Activated CD8-positive, alpha-beta T cell treated with anti-CD3 and anti-CD28 coated beads, Interleukin-2, amount 10 ng/mL, durations not matched to agents 7 days and 5 days (primary cell): ENCODE measurements at regions of chr10 and their contacts with region 1.

Region 1: GRCh38 chr10:68988530-68989316 is at the start of gene KIFBP:
- DNase-seq: peak; percentile 90
- ATAC-seq: peak; percentile 88
- H3K4me3 Mint-ChIP-seq: peak within 1 kb of the TSS; percentile 99
- H3K27ac Mint-ChIP-seq: peak within 1 kb of the TSS; percentile 97
- H3K4me1 Mint-ChIP-seq: peaks cover 46% of the 10 kb centered on the region
- H3K27me3 Mint-ChIP-seq: no peaks in the 10 kb centered on the region
- total RNA-seq, gene KIFBP: 13.7 to 16.5 TPM

Region 2: DNA sequence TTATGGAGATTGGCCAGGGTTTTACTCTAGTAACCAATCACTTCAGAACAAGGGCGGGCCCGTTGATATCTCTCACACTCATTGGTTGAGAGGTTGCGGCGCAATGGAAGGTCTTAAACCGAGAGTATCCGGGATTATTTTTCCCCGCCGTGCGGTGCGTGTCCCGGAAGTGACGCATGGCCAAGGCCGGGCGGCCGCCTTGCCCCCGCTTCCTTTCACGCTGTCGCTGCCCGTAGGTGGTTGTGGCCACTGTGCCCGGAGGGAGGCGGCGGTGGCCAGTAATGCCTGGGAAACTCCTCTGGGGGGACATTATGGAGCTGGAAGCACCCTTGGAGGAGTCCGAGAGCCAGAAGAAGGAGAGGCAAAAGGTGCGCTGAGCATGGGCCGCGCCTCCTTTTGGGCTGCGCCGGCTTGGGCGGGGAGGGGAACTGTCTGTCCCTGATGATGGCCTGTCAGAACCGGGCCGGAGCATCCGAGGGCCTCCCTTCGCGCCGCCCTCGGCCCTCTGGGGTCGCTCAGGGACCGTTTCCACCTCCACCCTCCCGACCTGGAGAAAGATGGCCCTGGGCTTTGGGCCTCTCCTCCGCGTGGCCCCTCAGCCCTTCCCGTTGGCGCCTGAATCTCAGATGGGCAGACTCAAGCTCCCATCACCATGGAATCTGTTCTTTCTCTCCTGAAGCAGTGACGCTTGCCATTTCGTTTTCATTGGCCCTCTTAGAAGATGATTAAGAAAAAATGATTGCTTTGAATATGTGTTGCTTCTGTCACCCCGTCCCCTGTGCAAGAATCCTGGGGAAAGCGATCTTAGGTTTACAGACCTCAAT is 87.4 kb before region 1 on chr10 and contains the start of gene DDX50:
- CTCF ChIA-PET with region 1: no interaction called
- POLR2A ChIA-PET with region 1: no interaction called
- DNase-seq: peak; percentile 99
- ATAC-seq: peak; percentile 97
- H3K4me3 Mint-ChIP-seq: peak within 1 kb of the TSS; percentile 93
- H3K27ac Mint-ChIP-seq: peak within 1 kb of the TSS; percentile 98
- H3K4me1 Mint-ChIP-seq: peaks cover 40% of the 10 kb centered on the region
- H3K27me3 Mint-ChIP-seq: peaks cover 3% of the 10 kb centered on the region
- total RNA-seq, gene DDX50: 46.9 to 50.7 TPM

Region 3: DNA sequence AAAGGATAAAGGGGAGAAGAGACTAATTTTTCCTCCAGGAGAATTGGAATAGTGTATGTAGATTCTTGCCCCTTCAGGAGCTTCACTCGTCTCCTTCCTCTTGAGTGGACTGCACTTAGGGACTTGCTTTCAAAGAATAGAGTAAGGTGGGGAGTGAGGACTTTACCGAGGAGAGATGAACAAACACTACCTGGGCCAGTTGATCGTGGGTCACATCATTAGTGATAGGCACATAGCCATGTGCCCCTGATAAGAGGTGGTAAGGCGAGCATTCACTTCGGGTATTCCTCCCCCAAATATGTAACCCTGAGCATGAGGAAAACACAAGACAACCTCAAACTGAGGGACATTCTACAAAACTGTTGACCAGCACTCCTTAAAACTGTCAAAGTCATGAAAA is 14.7 kb before region 1 on chr10:
- CTCF ChIA-PET with region 1: interaction called, 13 read pairs
- POLR2A ChIA-PET with region 1: no interaction called
- DNase-seq: no peak
- ATAC-seq: no peak
- H3K4me3 Mint-ChIP-seq: no peak overlapping the region
- H3K27ac Mint-ChIP-seq: no peak overlapping the region
- H3K4me1 Mint-ChIP-seq: peaks cover 27% of the 10 kb centered on the region
- H3K27me3 Mint-ChIP-seq: no peaks in the 10 kb centered on the region